Endothelial cell of umbilical vein (primary cell): ENCODE measurements at regions of chr1 and their contacts with region 1.

Region 1: DNA sequence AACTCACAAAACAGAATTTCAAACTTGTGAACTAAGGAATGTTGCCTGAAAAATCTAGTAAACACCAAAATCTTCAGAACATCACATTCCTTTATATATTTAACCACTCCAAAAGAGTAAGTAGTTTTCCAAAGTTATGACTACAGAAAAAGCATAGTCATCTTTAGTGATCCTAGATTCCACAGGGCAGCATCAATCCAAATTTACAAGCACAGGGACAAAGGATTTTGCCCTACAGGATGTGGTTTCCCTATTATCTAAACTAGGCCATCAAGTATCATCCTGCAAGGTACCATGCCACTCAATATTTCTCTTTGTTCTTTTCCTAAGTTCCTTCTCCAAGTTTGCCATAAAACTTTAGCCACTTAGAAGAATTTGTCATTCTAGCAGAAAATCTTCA is 33.0 kb downstream of the COP1 start:
- DNase-seq: no peak
- H3K4me3 ChIP-seq: no peak overlapping the region
- H3K27ac ChIP-seq: no peak overlapping the region
- H3K4me1 ChIP-seq: peaks cover 13% of the 10 kb centered on the region
- H3K27me3 ChIP-seq: no peaks in the 10 kb centered on the region
- CTCF ChIP-seq: no peak
- POLR2A ChIP-seq: no peak

Region 2: GRCh38 chr1:175413367-175413766 is 760.7 kb before region 1 on chr1:
- CTCF ChIA-PET with region 1: no interaction called
- POLR2A ChIA-PET with region 1: no interaction called
- dilution Hi-C with region 1: no loop called
- intact Hi-C with region 1: no loop called
- DNase-seq: no peak
- H3K4me3 ChIP-seq: no peak overlapping the region
- H3K27ac ChIP-seq: no peak overlapping the region
- H3K4me1 ChIP-seq: no peaks in the 10 kb centered on the region
- H3K27me3 ChIP-seq: no peaks in the 10 kb centered on the region
- CTCF ChIP-seq: no peak
- POLR2A ChIP-seq: no peak

Region 3: GRCh38 chr1:176096015-176096414 is 78.1 kb before region 1 on chr1:
- CTCF ChIA-PET with region 1: no interaction called
- POLR2A ChIA-PET with region 1: no interaction called
- dilution Hi-C with region 1: no loop called
- intact Hi-C with region 1: no loop called
- DNase-seq: no peak
- H3K4me3 ChIP-seq: no peak overlapping the region
- H3K27ac ChIP-seq: no peak overlapping the region
- H3K4me1 ChIP-seq: no peaks in the 10 kb centered on the region
- H3K27me3 ChIP-seq: no peaks in the 10 kb centered on the region
- CTCF ChIP-seq: no peak
- POLR2A ChIP-seq: no peak

Region 4: GRCh38 chr1:176159993-176160392 is 14.1 kb before region 1 on chr1:
- CTCF ChIA-PET with region 1: no interaction called
- POLR2A ChIA-PET with region 1: no interaction called
- dilution Hi-C with region 1: no loop called
- intact Hi-C with region 1: loop called (anchors 2 kb)
- DNase-seq: no peak
- H3K4me3 ChIP-seq: no peak overlapping the region
- H3K27ac ChIP-seq: no peak overlapping the region
- H3K4me1 ChIP-seq: no peaks in the 10 kb centered on the region
- H3K27me3 ChIP-seq: no peaks in the 10 kb centered on the region
- CTCF ChIP-seq: no peak
- POLR2A ChIP-seq: no peak